K562 (cell line): ENCODE measurements at regions of chr1 and their contacts with region 1.

Region 1: DNA sequence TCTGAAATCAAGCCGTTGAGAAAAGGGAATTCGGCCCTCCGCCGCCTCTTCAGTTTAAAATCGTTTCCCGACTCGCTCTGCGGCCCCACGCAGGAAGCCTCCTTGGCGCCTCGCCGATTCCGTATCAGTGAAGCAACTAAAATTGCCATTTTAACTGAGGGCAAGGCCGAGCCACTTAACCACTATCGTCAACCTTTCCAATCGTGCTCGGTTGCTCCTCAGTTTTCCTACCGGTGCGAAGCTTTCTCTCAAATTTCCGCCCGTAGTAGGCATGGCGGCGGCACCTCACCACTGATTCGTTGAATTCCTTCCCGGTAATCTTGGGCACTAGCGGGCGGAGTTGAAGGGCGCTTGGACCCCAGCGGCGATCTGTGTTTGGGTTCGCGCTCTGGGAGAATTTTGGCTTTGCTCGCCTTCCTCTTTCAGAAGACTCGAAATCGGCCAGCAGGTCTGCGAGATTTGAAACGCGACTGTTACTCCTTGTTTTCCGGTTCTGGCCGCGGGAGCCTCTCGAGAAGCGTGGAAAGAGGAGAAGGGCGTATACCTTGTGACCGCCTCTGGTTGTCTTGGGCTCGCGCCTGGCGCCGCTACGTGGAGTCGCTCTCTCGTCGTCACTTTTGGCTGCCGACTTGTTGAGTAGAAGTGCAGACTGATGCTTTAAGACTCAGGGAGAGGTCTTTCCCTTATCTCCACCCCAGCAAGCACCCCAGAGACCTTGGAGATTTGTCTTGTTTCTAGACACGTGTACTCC is at the starts of genes CENPL and DARS2:
- DNase-seq: peak; percentile 76 to 98 (median 84)
- ATAC-seq: peak; percentile 90
- H3K4me3 ChIP-seq: peak within 1 kb of the TSS; percentile 56
- H3K27ac ChIP-seq: peak within 1 kb of the TSS; percentile 91
- H3K4me1 ChIP-seq: peaks cover 8 to 13% of the 10 kb centered on the region in 2 experiments; a peak in 4 of 5 replicates
- H3K27me3 ChIP-seq: no peaks in the 10 kb centered on the region
- CTCF ChIP-seq: no peak
- EP300 ChIP-seq: peak; percentile 7
- POLR2A ChIP-seq: peak; percentile 98
- RAD21 ChIP-seq: no peak
- polyA plus RNA-seq, gene CENPL: 37.0 to 39.7 TPM
- polyA plus RNA-seq, gene DARS2: 55.4 to 74.8 TPM

Region 2: GRCh38 chr1:173420330-173420806 is 404.1 kb before region 1 on chr1:
- CTCF ChIA-PET with region 1: interaction called, 14 read pairs
- POLR2A ChIA-PET with region 1: no interaction called
- in situ Hi-C with region 1: no loop called
- intact Hi-C with region 1: no loop called
- DNase-seq: peak; percentile 67 to 90 (median 78)
- ATAC-seq: peak; percentile 85
- H3K4me3 ChIP-seq: no peak overlapping the region
- H3K27ac ChIP-seq: peak overlapping the region; percentile 4; the same call in 1 of the 3 replicates
- H3K4me1 ChIP-seq: peaks cover 4 to 40% of the 10 kb centered on the region in 2 experiments; a peak in 4 of 5 replicates
- H3K27me3 ChIP-seq: no peaks in the 10 kb centered on the region
- CTCF ChIP-seq: peak; percentile 77 to 96 (median 86)
- EP300 ChIP-seq: no peak; the same call in 1 of the 2 replicates
- POLR2A ChIP-seq: no peak
- RAD21 ChIP-seq: peak; percentile 98

Region 3: DNA sequence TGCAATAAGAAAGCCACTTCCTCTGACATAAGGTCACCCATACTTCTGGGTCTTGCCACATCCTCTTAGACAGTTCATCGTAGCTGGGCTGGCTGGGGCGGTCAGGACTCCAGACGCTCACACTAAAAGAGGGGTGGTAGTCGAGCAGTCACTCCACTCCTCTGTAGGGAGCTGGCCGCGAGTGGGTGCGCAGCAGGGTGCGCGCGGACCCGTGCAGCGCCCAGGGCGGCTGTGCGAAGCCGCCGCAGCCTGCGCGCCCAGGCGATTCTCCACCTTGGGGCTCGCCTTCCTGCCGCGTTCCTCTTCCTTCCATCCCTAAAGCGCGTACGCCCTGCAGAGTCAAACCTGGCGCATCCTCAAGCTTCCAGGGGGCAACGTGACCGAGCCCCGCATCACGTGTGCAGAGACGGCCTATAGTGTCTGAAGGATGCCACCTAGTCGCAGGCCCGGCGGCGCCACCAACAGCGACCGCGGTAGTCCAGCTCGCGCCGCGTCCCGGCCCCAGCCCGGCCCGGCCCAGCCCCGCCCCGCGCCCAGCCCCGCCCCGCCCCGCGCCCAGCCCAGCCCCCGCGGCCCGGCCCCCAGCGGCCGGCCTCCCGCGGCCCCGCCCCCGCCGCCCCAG is 347.7 kb before region 1 on chr1:
- CTCF ChIA-PET with region 1: no interaction called
- POLR2A ChIA-PET with region 1: interaction called, 5 read pairs
- in situ Hi-C with region 1: no loop called
- intact Hi-C with region 1: loop called (anchors 5 kb)
- DNase-seq: peak; percentile 96 to 97 (median 96)
- ATAC-seq: peak; percentile 90
- H3K4me3 ChIP-seq: peak overlapping the region; percentile 89
- H3K27ac ChIP-seq: peak overlapping the region; percentile 82
- H3K4me1 ChIP-seq: peaks cover 11 to 34% of the 10 kb centered on the region in 2 experiments
- H3K27me3 ChIP-seq: no peaks in the 10 kb centered on the region
- CTCF ChIP-seq: peak in 1 of 3 experiments; percentile 17; a peak in 1 of 6 replicates
- EP300 ChIP-seq: no peak; the same call in 1 of the 2 replicates
- POLR2A ChIP-seq: 0 out of 2 replicates have a peak, but pooled peaks have one; percentile 54
- RAD21 ChIP-seq: peak in 1 of 2 experiments; percentile 32; a peak in 2 of 4 replicates

Region 4: DNA sequence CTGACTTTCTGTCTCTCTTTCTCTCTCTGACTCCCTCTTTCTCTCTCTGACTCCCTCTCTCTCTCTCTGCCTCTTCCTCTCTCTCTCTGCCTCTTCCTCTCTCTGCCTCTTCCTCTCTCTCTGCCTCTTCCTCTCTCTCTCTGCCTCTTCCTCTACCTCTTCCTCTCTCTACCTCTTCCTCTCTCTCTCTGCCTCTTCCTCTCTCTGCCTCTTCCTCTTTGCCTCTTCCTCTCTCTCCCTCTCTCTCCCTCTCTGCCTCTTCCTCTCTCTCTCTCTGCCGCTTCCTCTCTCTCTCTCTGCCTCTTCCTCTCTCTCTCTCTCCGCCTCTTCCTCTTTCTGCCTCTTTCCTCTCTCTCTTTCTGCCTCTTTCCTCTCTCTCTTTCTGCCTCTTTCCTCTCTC is 136.2 kb before region 1 on chr1:
- CTCF ChIA-PET with region 1: no interaction called
- POLR2A ChIA-PET with region 1: no interaction called
- in situ Hi-C with region 1: no loop called
- intact Hi-C with region 1: loop called (anchors 2 kb)
- DNase-seq: no peak
- ATAC-seq: no peak
- H3K4me3 ChIP-seq: no peak overlapping the region
- H3K27ac ChIP-seq: no peak overlapping the region
- H3K4me1 ChIP-seq: peaks cover 7 to 9% of the 10 kb centered on the region in 2 experiments; a peak in 4 of 5 replicates
- H3K27me3 ChIP-seq: no peaks in the 10 kb centered on the region
- CTCF ChIP-seq: no peak
- EP300 ChIP-seq: no peak
- POLR2A ChIP-seq: no peak
- RAD21 ChIP-seq: no peak

Region 5: DNA sequence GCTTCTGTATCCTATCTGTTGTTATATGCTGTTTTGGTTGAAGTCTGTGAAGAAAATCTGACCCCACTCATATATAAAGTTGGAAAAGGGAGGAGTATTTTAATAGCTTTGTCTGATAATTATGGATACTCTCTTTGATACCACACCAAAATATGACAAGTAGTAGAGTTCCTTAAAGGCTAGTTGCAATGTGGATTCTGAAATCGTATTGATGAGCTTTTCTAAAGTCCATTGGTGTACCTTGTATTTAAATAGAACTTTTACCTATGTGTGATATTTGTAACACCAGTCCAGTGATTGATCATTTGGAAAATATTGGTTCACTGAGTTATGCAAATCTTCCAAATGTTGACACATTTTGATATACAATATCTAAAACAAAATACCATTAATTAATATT is 35.6 kb after region 1 on chr1:
- CTCF ChIA-PET with region 1: no interaction called
- POLR2A ChIA-PET with region 1: interaction called, 12 read pairs
- in situ Hi-C with region 1: no loop called
- intact Hi-C with region 1: no loop called
- DNase-seq: no peak
- ATAC-seq: no peak
- H3K4me3 ChIP-seq: no peak overlapping the region
- H3K27ac ChIP-seq: no peak overlapping the region
- H3K4me1 ChIP-seq: peaks cover 0 to 3% of the 10 kb centered on the region in 2 experiments; a peak in 2 of 5 replicates
- H3K27me3 ChIP-seq: no peaks in the 10 kb centered on the region
- CTCF ChIP-seq: no peak
- EP300 ChIP-seq: no peak
- POLR2A ChIP-seq: no peak; the same call in 1 of the 2 replicates
- RAD21 ChIP-seq: no peak

Region 6: DNA sequence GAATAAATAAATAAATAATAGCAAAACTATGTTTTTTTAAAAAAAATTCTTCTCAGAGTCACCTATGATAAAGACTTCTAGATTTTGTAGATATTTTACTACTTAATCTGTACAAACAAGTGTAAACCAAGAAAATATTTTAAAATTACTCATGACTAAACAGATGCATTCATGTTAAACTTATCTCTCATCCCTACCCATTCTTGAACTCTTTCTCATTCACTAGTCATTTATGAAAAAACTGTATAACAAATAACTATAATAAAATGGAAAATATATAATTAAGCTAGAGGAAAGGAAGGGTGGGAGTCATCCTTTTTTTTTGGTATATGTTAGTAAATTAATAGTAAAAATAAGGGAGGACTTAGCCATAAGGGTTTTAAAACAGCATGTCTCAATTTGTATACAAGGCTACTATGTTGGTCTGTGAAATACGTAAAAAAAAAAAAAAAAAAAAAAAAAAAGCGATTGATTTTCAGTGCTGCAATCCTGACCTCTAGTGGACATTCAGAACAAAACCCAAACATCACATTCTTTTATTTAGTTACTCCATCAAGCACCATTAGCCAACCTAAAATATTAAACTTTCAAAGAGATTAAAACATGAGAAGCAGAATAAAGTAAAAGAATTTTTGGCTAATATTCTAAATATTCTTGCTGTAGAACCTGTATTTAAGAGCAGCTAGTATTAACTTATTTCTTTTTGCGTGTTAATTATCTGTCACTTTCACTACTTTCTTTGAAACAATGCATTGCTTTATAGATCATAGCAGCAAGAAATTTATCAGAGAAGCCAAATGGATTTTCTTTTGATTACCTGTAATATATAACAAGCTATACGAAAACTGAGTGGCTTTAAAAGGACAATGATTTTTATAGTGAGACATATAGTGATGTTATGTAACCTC is 919.4 kb after region 1 on chr1:
- CTCF ChIA-PET with region 1: interaction called, 3 read pairs
- POLR2A ChIA-PET with region 1: no interaction called
- in situ Hi-C with region 1: loop called (anchors 25 kb)
- intact Hi-C with region 1: no loop called
- DNase-seq: peak; percentile 32 to 55 (median 44)
- ATAC-seq: peak; percentile 40
- H3K4me3 ChIP-seq: no peak overlapping the region
- H3K27ac ChIP-seq: no peak overlapping the region
- H3K4me1 ChIP-seq: peaks cover 4 to 15% of the 10 kb centered on the region in 2 experiments
- H3K27me3 ChIP-seq: no peaks in the 10 kb centered on the region
- CTCF ChIP-seq: peak; percentile 46 to 85 (median 51); a peak in 5 of 6 replicates
- EP300 ChIP-seq: no peak
- POLR2A ChIP-seq: no peak
- RAD21 ChIP-seq: peak; percentile 55 to 64